ENCODE measurements at regions of chr7 and their contacts with region 1.

Region 1: DNA sequence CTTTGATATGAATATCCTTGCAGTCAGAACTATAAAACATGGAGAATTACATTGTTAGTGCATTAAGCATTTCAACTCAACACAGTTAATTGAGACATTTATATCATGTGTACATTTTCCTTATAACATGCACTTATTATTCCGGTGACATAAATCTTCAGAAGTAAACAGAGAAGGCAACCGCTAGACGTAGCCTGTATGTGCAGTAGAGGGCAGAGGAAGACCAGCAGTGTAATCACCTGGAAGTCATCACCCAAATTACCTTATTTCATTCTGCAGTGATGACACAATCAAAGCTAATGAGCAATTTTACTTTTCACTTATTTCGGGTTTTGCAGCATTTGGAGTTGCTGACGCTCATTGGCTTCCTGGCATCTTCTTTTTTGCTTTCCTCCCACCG is 394.6 kb downstream of the SDK1 start:
- DNase-seq: no peak
- H3K4me3 ChIP-seq: no peak overlapping the region
- CTCF ChIP-seq: no peak
- POLR2A ChIP-seq: no peak

Region 2: GRCh38 chr7:3730276-3730675 is 34.7 kb after region 1 on chr7:
- intact Hi-C with region 1: loop called (anchors 1 kb)
- DNase-seq: no peak
- H3K4me3 ChIP-seq: no peak overlapping the region
- CTCF ChIP-seq: no peak
- POLR2A ChIP-seq: no peak

Measured in lower leg skin (tissue), 4 donors.